ENCODE measurements at regions of chr7 and their contacts with region 1.

Region 1: DNA sequence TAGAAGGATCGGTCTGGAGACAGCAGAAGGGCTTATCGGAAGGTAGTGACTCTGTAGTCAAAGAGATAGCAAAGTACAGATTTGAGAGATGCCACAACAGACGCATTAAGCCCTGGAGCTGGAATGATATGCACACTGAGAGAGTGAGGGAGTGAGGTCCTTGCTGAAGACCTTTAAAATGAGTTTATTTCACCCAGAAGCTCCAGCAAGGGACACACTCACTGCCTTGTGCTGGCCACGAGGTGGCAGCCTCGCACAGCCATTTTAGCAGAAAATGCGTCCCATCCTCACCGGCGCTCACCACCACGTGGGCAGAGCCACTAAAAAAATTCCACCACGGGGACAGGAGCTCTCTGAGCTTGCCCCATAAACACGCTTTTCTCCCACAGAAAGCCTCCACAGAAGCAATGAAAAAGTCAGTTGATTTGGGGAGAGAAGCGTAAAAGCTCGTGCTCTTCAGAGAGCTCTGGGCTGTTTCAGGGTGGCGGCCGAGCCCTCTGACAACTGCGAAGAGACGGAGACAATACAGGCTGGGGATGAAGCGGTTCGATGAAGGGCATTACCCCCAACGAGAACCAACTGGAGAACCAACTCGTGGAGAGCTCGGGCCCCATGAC is 163.0 kb upstream of the KLF14 start:
- DNase-seq: peak; percentile 85
- ATAC-seq: peak; percentile 77
- H3K4me3 ChIP-seq: no peak overlapping the region
- H3K4me3 Mint-ChIP-seq: peak overlapping the region; percentile 30
- H3K27ac ChIP-seq: peak overlapping the region in 1 of 2 donors; percentile 21
- H3K27ac Mint-ChIP-seq: peak overlapping the region; percentile 84
- H3K4me1 ChIP-seq: peaks cover 23 to 54% of the 10 kb centered on the region in 2 donors
- H3K4me1 Mint-ChIP-seq: peaks cover 71% of the 10 kb centered on the region
- H3K27me3 ChIP-seq: no peaks in the 10 kb centered on the region
- H3K27me3 Mint-ChIP-seq: no peaks in the 10 kb centered on the region
- CTCF ChIP-seq: peak; percentile 83

Region 2: GRCh38 chr7:130880668-130881067 is 16.3 kb before region 1 on chr7:
- CTCF ChIA-PET with region 1: interaction called, 16 read pairs
- POLR2A ChIA-PET with region 1: no interaction called
- intact Hi-C with region 1: no loop called
- DNase-seq: no peak
- ATAC-seq: no peak
- H3K4me3 ChIP-seq: no peak overlapping the region
- H3K4me3 Mint-ChIP-seq: no peak overlapping the region
- H3K27ac ChIP-seq: no peak overlapping the region
- H3K27ac Mint-ChIP-seq: peak overlapping the region; percentile 15
- H3K4me1 ChIP-seq: no peaks in the 10 kb centered on the region
- H3K4me1 Mint-ChIP-seq: peaks cover 6% of the 10 kb centered on the region
- H3K27me3 ChIP-seq: no peaks in the 10 kb centered on the region
- H3K27me3 Mint-ChIP-seq: no peaks in the 10 kb centered on the region
- CTCF ChIP-seq: no peak

Region 3: GRCh38 chr7:130935564-130936157 is 38.7 kb after region 1 on chr7:
- CTCF ChIA-PET with region 1: interaction called, 12 read pairs
- POLR2A ChIA-PET with region 1: no interaction called
- intact Hi-C with region 1: no loop called
- DNase-seq: no peak
- ATAC-seq: no peak
- H3K4me3 ChIP-seq: no peak overlapping the region
- H3K4me3 Mint-ChIP-seq: no peak overlapping the region
- H3K27ac ChIP-seq: no peak overlapping the region
- H3K27ac Mint-ChIP-seq: peak overlapping the region; percentile 22
- H3K4me1 ChIP-seq: peaks cover 9 to 14% of the 10 kb centered on the region in 2 donors
- H3K4me1 Mint-ChIP-seq: peaks cover 63% of the 10 kb centered on the region
- H3K27me3 ChIP-seq: no peaks in the 10 kb centered on the region
- H3K27me3 Mint-ChIP-seq: no peaks in the 10 kb centered on the region
- CTCF ChIP-seq: no peak

Region 4: DNA sequence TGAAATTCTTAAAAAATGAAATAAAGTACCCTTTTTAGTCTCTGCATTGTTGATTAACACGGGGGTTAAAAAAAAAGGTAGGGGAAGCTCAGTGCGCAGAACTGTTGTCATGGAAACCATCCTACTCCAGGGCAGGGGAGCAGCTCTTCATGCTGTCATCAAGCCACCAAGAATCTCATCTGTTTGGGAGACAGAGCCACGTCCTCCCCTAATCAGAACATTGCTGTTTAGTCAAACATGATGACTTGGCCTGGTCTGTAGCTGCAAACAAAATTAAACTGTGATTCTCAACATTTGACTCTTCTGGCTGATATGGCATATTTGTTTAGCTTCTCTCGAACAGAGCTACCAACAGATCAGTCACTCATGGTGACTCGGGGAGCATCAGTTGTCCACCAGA is 91.4 kb after region 1 on chr7:
- CTCF ChIA-PET with region 1: interaction called, 48 read pairs
- POLR2A ChIA-PET with region 1: no interaction called
- intact Hi-C with region 1: no loop called
- DNase-seq: peak; percentile 52
- ATAC-seq: no peak
- H3K4me3 ChIP-seq: no peak overlapping the region
- H3K4me3 Mint-ChIP-seq: peak overlapping the region; percentile 5
- H3K27ac ChIP-seq: peak overlapping the region in 1 of 2 donors; percentile 67
- H3K27ac Mint-ChIP-seq: peak overlapping the region; percentile 47
- H3K4me1 ChIP-seq: peaks cover 22% of the 10 kb centered on the region in 2 donors
- H3K4me1 Mint-ChIP-seq: peaks cover 67% of the 10 kb centered on the region
- H3K27me3 ChIP-seq: no peaks in the 10 kb centered on the region
- H3K27me3 Mint-ChIP-seq: no peaks in the 10 kb centered on the region
- CTCF ChIP-seq: no peak

Region 5: DNA sequence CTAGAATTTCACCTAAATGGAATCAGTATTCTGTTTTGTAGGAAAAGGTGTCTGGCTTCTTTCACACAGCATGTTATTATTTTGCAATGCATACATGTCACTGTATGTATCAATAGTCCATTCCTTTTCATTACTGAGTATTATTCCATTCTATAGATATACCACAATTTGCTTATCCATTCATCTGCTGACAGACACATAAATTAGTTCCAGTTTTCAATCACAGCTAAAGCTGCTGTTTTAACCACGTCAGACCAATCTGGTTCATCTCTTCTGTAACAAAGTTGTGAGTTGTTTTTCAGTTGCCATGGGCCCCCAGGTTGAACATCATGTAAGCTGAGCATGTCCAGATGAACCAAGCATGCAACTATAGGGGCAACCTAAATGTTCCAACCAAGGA is 148.5 kb after region 1 on chr7:
- CTCF ChIA-PET with region 1: interaction called, 131 read pairs
- POLR2A ChIA-PET with region 1: interaction called, 5 read pairs
- intact Hi-C with region 1: loop called (anchors 1 kb)
- DNase-seq: no peak
- ATAC-seq: no peak
- H3K4me3 ChIP-seq: no peak overlapping the region
- H3K4me3 Mint-ChIP-seq: no peak overlapping the region
- H3K27ac ChIP-seq: peak overlapping the region in 1 of 2 donors; percentile 49
- H3K27ac Mint-ChIP-seq: no peak overlapping the region
- H3K4me1 ChIP-seq: peaks cover 17 to 24% of the 10 kb centered on the region in 2 donors
- H3K4me1 Mint-ChIP-seq: peaks cover 63% of the 10 kb centered on the region
- H3K27me3 ChIP-seq: no peaks in the 10 kb centered on the region
- H3K27me3 Mint-ChIP-seq: no peaks in the 10 kb centered on the region
- CTCF ChIP-seq: no peak

Region 6: DNA sequence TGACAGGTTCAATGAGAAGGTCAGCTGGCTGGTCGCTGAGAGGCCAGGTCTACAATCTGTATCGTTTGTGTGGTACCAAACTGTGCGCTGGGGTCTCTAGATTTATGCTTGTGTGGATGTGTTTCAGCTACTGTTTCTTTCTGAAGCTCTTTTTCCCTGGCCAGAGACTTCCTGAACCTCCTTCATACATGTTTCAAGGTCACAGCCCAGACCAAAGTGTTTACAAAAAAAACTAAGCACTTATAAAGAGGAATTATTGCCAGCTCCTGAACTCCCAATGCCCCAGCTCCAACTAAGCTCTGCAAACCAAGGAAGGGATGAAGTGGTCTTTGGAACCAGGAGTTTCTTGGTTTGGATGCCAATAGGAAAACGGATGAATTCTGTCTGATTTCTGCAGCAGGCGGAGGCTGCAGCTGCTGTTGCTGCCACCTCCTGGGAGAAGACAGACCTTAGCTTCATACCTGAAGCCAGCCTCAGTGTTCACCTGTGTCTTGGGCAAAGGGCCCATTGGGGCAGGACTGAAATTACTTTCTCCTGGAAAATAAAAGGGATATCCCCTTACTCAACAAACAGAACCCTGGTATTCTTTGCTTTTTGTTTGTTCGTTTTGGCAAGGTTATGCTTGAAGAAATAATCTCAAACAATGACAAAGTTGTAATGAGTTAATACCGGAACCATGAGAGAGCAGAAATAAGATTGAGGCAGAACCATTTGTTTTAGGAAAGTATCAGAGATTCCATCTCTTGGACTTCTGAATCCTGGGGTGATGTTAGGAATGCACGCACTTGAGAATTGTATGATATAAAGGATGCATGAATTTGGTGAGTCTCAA is 406.1 kb after region 1 on chr7:
- CTCF ChIA-PET with region 1: interaction called, 25 read pairs
- POLR2A ChIA-PET with region 1: no interaction called
- intact Hi-C with region 1: loop called (anchors 5 kb)
- DNase-seq: peak; percentile 42
- ATAC-seq: no peak
- H3K4me3 ChIP-seq: no peak overlapping the region
- H3K4me3 Mint-ChIP-seq: no peak overlapping the region
- H3K27ac ChIP-seq: no peak overlapping the region
- H3K27ac Mint-ChIP-seq: no peak overlapping the region
- H3K4me1 ChIP-seq: no peaks in the 10 kb centered on the region
- H3K4me1 Mint-ChIP-seq: peaks cover 2% of the 10 kb centered on the region
- H3K27me3 ChIP-seq: no peaks in the 10 kb centered on the region
- H3K27me3 Mint-ChIP-seq: no peaks in the 10 kb centered on the region
- CTCF ChIP-seq: peak; percentile 41

Measured in B cell (primary cell).